AG04450 (cell line): ENCODE measurements at regions of chr18 and their contacts with region 1.

Region 1: GRCh38 chr18:79246348-79247108 is 149.2 kb upstream of the NFATC1 start:
- DNase-seq: peak; percentile 15
- H3K4me3 ChIP-seq: no peak overlapping the region
- H3K27ac ChIP-seq: no peak overlapping the region
- H3K27me3 ChIP-seq: no peaks in the 10 kb centered on the region
- CTCF ChIP-seq: peak; percentile 93

Region 2: GRCh38 chr18:79186649-79187048 is 59.9 kb before region 1 on chr18:
- CTCF ChIA-PET with region 1: no interaction called
- POLR2A ChIA-PET with region 1: no interaction called
- DNase-seq: no peak
- H3K4me3 ChIP-seq: no peak overlapping the region
- H3K27ac ChIP-seq: no peak overlapping the region
- H3K27me3 ChIP-seq: no peaks in the 10 kb centered on the region
- CTCF ChIP-seq: no peak

Region 3: GRCh38 chr18:79260510-79260909 is 14.0 kb after region 1 on chr18:
- CTCF ChIA-PET with region 1: interaction called, 10 read pairs
- POLR2A ChIA-PET with region 1: no interaction called
- DNase-seq: no peak
- H3K4me3 ChIP-seq: no peak overlapping the region
- H3K27ac ChIP-seq: no peak overlapping the region
- H3K27me3 ChIP-seq: no peaks in the 10 kb centered on the region
- CTCF ChIP-seq: no peak